B cell (primary cell): ENCODE measurements at regions of chr7 and their contacts with region 1.

Region 1: DNA sequence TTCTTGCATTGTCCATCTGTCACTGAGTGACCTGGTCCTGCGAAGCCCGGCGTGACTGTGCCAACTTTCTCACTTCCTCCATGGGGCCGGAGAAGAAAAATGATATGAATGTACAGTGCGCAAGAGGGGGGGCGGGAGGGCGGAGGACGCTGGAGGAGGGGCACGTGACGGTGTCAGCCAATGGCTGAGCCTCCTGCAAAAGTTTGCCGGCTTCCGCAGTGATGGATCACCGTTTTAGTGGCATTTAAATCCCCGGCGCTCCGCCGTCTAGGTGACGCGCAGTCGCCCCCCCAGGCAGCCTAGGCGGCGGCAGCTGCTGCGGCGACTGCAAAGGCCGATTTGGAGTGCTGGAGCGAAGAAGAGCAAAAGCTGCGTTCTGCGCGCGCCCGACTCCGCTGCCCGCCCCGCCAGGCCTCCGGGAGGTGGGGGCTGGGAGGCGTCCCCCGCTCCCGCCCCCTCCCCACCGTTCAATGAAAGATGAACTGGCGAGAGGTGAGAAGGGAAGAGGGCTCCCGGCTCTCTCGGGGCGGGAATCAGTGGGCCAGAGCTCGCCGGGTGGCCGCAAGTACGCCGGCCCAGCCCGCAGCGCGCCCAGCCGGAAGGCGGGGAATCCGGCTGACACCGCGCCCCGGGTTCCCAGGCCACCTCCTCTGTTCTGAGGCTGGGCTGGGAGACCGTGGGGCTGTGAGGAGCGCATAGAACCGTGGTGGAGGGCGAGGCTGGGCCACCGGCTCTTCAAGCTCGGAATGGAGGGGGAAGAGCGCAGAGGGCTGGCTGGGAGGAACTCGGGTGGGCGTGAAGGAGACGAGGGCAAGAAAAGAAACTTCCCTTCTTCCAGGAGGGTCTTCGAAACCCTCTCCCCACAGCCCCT is at the start of gene HOXA1:
- DNase-seq: peak; percentile 84
- ATAC-seq: peak; percentile 82
- H3K4me3 ChIP-seq: peak within 1 kb of the TSS; percentile 68 to 91 (median 79)
- H3K4me3 Mint-ChIP-seq: peak within 1 kb of the TSS; percentile 88
- H3K27ac ChIP-seq: peak within 1 kb of the TSS; percentile 2 to 53
- H3K27ac Mint-ChIP-seq: peak within 1 kb of the TSS; percentile 73
- H3K4me1 ChIP-seq: peaks cover 32 to 37% of the 10 kb centered on the region in 2 donors
- H3K4me1 Mint-ChIP-seq: peaks cover 32% of the 10 kb centered on the region
- H3K27me3 ChIP-seq: peaks cover 2 to 79% (median 46%) of the 10 kb centered on the region in 4 experiments
- H3K27me3 Mint-ChIP-seq: peaks cover 59% of the 10 kb centered on the region
- CTCF ChIP-seq: no peak
- total RNA-seq, gene HOXA1: 0.37 and 0.87 TPM in 2 replicates

Region 2: DNA sequence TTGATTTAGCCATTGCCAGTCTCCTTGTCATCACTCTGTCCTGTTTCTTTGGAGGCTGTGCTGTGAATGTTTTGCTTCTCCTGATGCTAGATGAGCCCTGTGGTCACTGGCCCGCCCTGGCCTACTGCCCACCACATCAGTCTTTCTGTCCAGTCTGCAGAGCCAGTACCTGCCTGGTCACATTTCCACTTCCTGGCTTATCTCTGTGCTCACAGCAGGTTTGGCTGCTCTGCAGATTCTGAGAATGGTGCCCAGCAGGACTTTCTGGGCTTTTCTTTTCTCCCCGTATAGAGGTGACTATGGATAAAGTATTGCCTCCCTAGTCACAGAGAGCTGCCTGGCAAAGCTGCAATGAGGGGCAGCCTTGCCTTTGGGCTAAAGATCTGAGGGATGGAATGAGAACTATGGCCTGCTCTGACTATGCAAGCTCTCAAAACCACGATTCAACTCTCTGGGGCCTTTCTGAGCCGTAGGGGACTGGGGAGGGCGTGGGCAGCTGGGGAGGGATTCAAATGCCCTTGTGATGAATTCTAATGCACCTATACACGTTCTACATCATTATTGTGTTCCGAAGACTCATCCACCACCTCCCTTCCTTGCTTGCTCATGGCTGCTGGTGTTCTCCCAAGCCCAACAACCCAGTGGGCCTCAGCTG is 1457.4 kb before region 1 on chr7:
- CTCF ChIA-PET with region 1: no interaction called
- POLR2A ChIA-PET with region 1: interaction called, 11 read pairs
- intact Hi-C with region 1: no loop called
- DNase-seq: no peak
- ATAC-seq: no peak
- H3K4me3 ChIP-seq: no peak overlapping the region
- H3K4me3 Mint-ChIP-seq: no peak overlapping the region
- H3K27ac ChIP-seq: no peak overlapping the region
- H3K27ac Mint-ChIP-seq: no peak overlapping the region
- H3K4me1 ChIP-seq: no peaks in the 10 kb centered on the region
- H3K4me1 Mint-ChIP-seq: no peaks in the 10 kb centered on the region
- H3K27me3 ChIP-seq: no peaks in the 10 kb centered on the region
- H3K27me3 Mint-ChIP-seq: no peaks in the 10 kb centered on the region
- CTCF ChIP-seq: no peak

Region 3: DNA sequence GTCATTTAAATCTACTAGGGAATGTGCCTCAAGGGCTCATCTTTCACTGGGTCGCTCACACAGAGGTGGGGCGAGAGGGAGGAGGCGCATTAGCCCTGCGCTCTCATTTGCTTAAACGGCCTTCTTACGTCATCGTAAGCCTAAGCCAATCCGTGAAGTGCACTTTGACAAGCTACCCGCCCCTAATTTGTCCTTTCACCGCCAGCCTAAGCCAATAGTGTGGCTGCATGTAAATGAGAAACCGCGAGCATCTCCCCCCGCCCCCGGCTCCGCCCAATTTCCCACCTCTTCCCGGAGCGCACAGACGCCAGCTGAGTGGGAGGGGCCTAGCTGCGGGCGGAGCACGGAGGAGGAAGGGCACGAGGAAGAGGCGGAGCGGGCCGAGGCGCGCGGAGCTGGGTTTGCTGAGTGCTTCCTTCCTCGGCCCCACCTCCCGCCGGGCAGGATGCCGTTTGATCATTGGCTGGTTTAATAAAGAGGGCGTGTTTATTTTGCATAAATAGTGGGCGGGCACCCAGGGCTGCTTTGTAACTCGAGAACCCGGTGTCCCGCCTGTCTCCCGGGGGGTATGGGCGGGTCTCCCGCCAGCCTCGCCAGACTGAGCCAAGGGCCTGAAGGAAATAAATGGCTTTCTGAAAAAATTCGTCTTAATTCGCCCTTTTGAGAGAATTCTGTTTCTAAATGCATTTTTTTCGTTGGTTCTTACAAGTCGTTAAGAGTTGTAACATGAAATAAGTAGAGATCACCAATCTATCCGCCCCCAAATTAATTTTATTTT is 1233.7 kb before region 1 on chr7:
- CTCF ChIA-PET with region 1: no interaction called
- POLR2A ChIA-PET with region 1: no interaction called
- intact Hi-C with region 1: loop called (anchors 5 kb)
- DNase-seq: peak; percentile 71
- ATAC-seq: peak; percentile 72
- H3K4me3 ChIP-seq: peak overlapping the region in 1 of 5 experiments; percentile 16
- H3K4me3 Mint-ChIP-seq: peak overlapping the region; percentile 47
- H3K27ac ChIP-seq: no peak overlapping the region
- H3K27ac Mint-ChIP-seq: peak overlapping the region; percentile 70
- H3K4me1 ChIP-seq: peaks cover 12 to 40% of the 10 kb centered on the region in 2 donors
- H3K4me1 Mint-ChIP-seq: peaks cover 3% of the 10 kb centered on the region
- H3K27me3 ChIP-seq: peaks cover 5 to 94% (median 79%) of the 10 kb centered on the region in 4 experiments
- H3K27me3 Mint-ChIP-seq: peaks cover 50% of the 10 kb centered on the region
- CTCF ChIP-seq: no peak

Region 4: GRCh38 chr7:26398756-26399501 is 697.2 kb before region 1 on chr7:
- CTCF ChIA-PET with region 1: no interaction called
- POLR2A ChIA-PET with region 1: no interaction called
- intact Hi-C with region 1: loop called (anchors 2 kb)
- DNase-seq: peak; percentile 95
- ATAC-seq: peak; percentile 86
- H3K4me3 ChIP-seq: peak overlapping the region in 4 of 5 experiments; percentile 50 to 70 (median 64)
- H3K4me3 Mint-ChIP-seq: peak overlapping the region; percentile 99
- H3K27ac ChIP-seq: peak overlapping the region; percentile 79 to 81
- H3K27ac Mint-ChIP-seq: peak overlapping the region; percentile 100
- H3K4me1 ChIP-seq: peaks cover 20 to 28% of the 10 kb centered on the region in 2 donors
- H3K4me1 Mint-ChIP-seq: peaks cover 32% of the 10 kb centered on the region
- H3K27me3 ChIP-seq: peaks cover 0 to 8% (median 0%) of the 10 kb centered on the region in 4 experiments
- H3K27me3 Mint-ChIP-seq: peaks cover 3% of the 10 kb centered on the region
- CTCF ChIP-seq: no peak

Region 5: GRCh38 chr7:26686448-26686981 is 409.6 kb before region 1 on chr7:
- CTCF ChIA-PET with region 1: interaction called, 4 read pairs
- POLR2A ChIA-PET with region 1: no interaction called
- intact Hi-C with region 1: loop called (anchors 5 kb)
- DNase-seq: peak; percentile 60
- ATAC-seq: no peak
- H3K4me3 ChIP-seq: no peak overlapping the region
- H3K4me3 Mint-ChIP-seq: no peak overlapping the region
- H3K27ac ChIP-seq: no peak overlapping the region
- H3K27ac Mint-ChIP-seq: no peak overlapping the region
- H3K4me1 ChIP-seq: peaks cover 7 to 14% of the 10 kb centered on the region in 2 donors
- H3K4me1 Mint-ChIP-seq: peaks cover 28% of the 10 kb centered on the region
- H3K27me3 ChIP-seq: no peaks in the 10 kb centered on the region
- H3K27me3 Mint-ChIP-seq: no peaks in the 10 kb centered on the region
- CTCF ChIP-seq: peak; percentile 87

Region 6: GRCh38 chr7:27071622-27072390 is 24.3 kb before region 1 on chr7:
- CTCF ChIA-PET with region 1: no interaction called
- POLR2A ChIA-PET with region 1: no interaction called
- intact Hi-C with region 1: no loop called
- DNase-seq: no peak
- ATAC-seq: no peak
- H3K4me3 ChIP-seq: no peak overlapping the region
- H3K4me3 Mint-ChIP-seq: no peak overlapping the region
- H3K27ac ChIP-seq: no peak overlapping the region
- H3K27ac Mint-ChIP-seq: no peak overlapping the region
- H3K4me1 ChIP-seq: no peaks in the 10 kb centered on the region
- H3K4me1 Mint-ChIP-seq: no peaks in the 10 kb centered on the region
- H3K27me3 ChIP-seq: peaks cover 0 to 3% (median 0%) of the 10 kb centered on the region in 4 experiments
- H3K27me3 Mint-ChIP-seq: peaks cover 16% of the 10 kb centered on the region
- CTCF ChIP-seq: no peak

Region 7: GRCh38 chr7:27130540-27131389 is 34.6 kb after region 1 on chr7 and contains the start of gene HOXA4:
- CTCF ChIA-PET with region 1: no interaction called
- POLR2A ChIA-PET with region 1: no interaction called
- intact Hi-C with region 1: loop called (anchors 1 kb)
- DNase-seq: peak; percentile 63
- ATAC-seq: peak; percentile 93
- H3K4me3 ChIP-seq: peak within 1 kb of the TSS; percentile 48 to 72 (median 58)
- H3K4me3 Mint-ChIP-seq: peak within 1 kb of the TSS; percentile 80
- H3K27ac ChIP-seq: peak within 1 kb of the TSS; percentile 54 to 57
- H3K27ac Mint-ChIP-seq: peak within 1 kb of the TSS; percentile 67
- H3K4me1 ChIP-seq: no peaks in the 10 kb centered on the region
- H3K4me1 Mint-ChIP-seq: no peaks in the 10 kb centered on the region
- H3K27me3 ChIP-seq: peaks cover 0 to 22% (median 5%) of the 10 kb centered on the region in 4 experiments
- H3K27me3 Mint-ChIP-seq: peaks cover 65% of the 10 kb centered on the region
- CTCF ChIP-seq: no peak
- total RNA-seq, gene HOXA4: 0.24 TPM in 1 of 2 replicates, not detected in the other

Region 8: GRCh38 chr7:27150568-27151340 is 54.6 kb after region 1 on chr7:
- CTCF ChIA-PET with region 1: interaction called, 4 read pairs
- POLR2A ChIA-PET with region 1: no interaction called
- intact Hi-C with region 1: loop called (anchors 1 kb)
- DNase-seq: peak; percentile 86
- ATAC-seq: peak; percentile 86
- H3K4me3 ChIP-seq: peak overlapping the region; percentile 26 to 48 (median 34)
- H3K4me3 Mint-ChIP-seq: peak overlapping the region; percentile 83
- H3K27ac ChIP-seq: no peak overlapping the region
- H3K27ac Mint-ChIP-seq: peak overlapping the region; percentile 73
- H3K4me1 ChIP-seq: peaks cover 62 to 71% of the 10 kb centered on the region in 2 donors
- H3K4me1 Mint-ChIP-seq: peaks cover 43% of the 10 kb centered on the region
- H3K27me3 ChIP-seq: peaks cover 0 to 99% (median 85%) of the 10 kb centered on the region in 4 experiments
- H3K27me3 Mint-ChIP-seq: peaks cover 74% of the 10 kb centered on the region
- CTCF ChIP-seq: peak; percentile 88